ENCODE measurements at regions of chr3 and their contacts with region 1.

Region 1: DNA sequence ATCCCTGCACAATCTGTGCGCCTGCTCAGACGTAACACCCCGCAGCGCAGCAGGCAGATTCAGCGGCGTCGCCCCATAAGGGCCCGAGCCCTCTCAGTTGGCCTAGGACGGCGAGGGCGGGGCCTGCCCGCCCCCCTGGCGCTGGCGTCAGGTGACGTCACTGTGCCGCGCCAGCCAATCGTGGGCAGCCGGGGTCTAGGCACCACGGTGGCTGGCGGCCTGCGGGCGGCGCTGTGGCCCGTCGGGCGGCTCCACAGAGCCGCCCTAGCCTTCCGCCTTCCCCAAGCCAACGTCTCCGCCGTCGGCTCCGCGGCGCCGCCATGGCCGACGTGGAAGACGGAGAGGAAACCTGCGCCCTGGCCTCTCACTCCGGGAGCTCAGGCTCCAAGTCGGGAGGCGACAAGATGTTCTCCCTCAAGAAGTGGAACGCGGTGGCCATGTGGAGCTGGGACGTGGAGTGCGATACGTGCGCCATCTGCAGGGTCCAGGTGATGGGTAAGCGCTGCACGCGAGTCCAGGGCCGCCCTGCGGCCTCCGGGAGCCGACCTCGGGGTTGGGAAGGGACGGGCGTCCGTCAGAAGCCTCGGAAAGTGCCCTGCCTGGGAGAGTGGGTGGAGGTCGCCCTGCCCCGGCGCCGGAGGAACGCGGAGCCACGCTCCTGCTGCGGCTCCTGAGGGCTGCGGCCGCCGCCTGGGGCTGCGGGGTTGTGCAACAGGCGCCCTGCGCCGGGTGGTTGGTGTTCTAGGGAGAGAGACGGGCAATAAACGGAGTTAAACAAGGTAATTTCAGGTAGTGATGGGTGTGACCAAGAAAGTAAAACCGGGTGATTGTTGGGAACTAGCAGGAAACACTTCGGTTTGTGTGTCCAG is at the start of gene RNF7:
- DNase-seq: peak; percentile 96 to 99
- H3K4me3 ChIP-seq: peak within 1 kb of the TSS; percentile 71 to 95 (median 85)
- H3K27ac ChIP-seq: peak within 1 kb of the TSS; percentile 90 to 98 (median 94)
- H3K4me1 ChIP-seq: peaks cover 9 to 47% (median 31%) of the 10 kb centered on the region in 4 donors
- H3K27me3 ChIP-seq: no peaks in the 10 kb centered on the region
- CTCF ChIP-seq: peak in 5 of 7 experiments; percentile 82 to 95 (median 87)
- EP300 ChIP-seq: no peak
- POLR2A ChIP-seq: no peak
- total RNA-seq, gene RNF7: 40.2 to 236 (median 62.4) TPM

Region 2: DNA sequence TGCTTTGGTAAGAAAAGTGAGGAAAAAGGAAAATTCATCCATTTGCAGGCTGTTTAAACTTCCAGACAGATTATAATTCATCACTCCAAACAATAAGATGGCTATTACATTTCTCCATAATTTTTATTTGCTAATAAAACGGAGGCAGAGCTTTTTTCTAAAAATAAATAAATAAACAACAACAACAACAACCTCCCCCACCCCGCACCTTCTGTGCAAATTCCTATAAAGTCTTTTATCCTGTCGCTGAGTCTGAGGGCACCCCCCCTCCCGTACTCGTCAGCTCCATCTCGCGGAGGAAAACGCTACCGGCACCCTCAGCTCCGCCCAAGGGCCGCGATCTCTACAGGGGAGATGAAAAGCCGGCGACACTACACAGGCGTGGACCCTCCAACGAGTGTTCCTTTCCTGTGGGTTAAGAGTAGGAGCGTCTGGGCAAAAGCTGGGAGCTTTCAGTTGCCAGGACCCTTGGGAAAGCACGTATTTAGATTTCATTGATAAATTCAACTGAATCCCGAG is 137.2 kb after region 1 on chr3:
- intact Hi-C with region 1: loop called (anchors 10 kb)
- DNase-seq: peak; percentile 86 to 95
- H3K4me3 ChIP-seq: peak overlapping the region; percentile 78 to 96 (median 95)
- H3K27ac ChIP-seq: peak overlapping the region; percentile 99 to 100 (median 100)
- H3K4me1 ChIP-seq: peaks cover 13 to 35% (median 23%) of the 10 kb centered on the region in 4 donors
- H3K27me3 ChIP-seq: no peaks in the 10 kb centered on the region
- CTCF ChIP-seq: peak in 5 of 7 experiments; percentile 66 to 81 (median 78)
- EP300 ChIP-seq: no peak
- POLR2A ChIP-seq: no peak

Region 3: DNA sequence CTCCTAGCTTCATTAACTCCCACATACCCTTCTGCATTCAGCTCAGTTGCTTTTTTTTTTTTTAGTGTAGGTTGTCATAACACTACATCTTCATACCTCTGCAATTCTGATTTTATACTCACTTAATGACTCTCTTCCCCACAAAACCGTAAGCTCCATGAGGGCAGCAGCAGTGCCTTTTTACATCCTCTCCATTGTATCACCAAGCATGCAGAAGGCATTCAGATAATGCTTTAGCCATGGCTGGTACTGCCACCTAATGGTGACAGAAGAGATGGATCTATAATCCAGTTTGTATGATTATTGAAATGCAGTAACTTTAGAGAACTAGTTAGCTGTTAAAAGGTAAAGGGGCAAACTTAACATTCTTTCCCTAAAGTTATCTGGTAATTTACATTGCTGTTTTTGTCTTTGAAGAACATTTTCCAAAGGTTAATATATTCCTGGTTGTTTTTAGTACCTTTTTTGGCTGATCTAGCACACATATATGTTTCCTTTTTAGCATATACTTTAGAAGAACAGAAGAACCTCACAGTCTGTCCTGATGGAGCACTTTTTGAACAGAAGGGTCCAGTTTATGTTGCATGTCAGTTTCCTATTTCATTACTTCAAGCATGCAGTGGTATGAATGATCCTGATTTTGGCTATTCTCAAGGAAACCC is 175.0 kb after region 1 on chr3:
- intact Hi-C with region 1: loop called (anchors 10 kb)
- DNase-seq: peak in 1 of 2 donors; percentile 80
- H3K4me3 ChIP-seq: no peak overlapping the region
- H3K27ac ChIP-seq: no peak overlapping the region
- H3K4me1 ChIP-seq: no peaks in the 10 kb centered on the region
- H3K27me3 ChIP-seq: no peaks in the 10 kb centered on the region
- CTCF ChIP-seq: peak in 5 of 7 experiments; percentile 29 to 57 (median 51)
- EP300 ChIP-seq: no peak
- POLR2A ChIP-seq: no peak